ENCODE measurements at regions of chr21 and their contacts with region 1.

Region 1: GRCh38 chr21:39633770-39634181 is 21.0 kb downstream of the B3GALT5 start:
- DNase-seq: peak; percentile 95
- ATAC-seq: peak; percentile 83
- H3K4me3 ChIP-seq: peak overlapping the region; percentile 48
- H3K27ac ChIP-seq: peak overlapping the region; percentile 95
- H3K4me1 ChIP-seq: peaks cover 72% of the 10 kb centered on the region
- H3K27me3 ChIP-seq: no peaks in the 10 kb centered on the region
- CTCF ChIP-seq: no peak

Region 2: DNA sequence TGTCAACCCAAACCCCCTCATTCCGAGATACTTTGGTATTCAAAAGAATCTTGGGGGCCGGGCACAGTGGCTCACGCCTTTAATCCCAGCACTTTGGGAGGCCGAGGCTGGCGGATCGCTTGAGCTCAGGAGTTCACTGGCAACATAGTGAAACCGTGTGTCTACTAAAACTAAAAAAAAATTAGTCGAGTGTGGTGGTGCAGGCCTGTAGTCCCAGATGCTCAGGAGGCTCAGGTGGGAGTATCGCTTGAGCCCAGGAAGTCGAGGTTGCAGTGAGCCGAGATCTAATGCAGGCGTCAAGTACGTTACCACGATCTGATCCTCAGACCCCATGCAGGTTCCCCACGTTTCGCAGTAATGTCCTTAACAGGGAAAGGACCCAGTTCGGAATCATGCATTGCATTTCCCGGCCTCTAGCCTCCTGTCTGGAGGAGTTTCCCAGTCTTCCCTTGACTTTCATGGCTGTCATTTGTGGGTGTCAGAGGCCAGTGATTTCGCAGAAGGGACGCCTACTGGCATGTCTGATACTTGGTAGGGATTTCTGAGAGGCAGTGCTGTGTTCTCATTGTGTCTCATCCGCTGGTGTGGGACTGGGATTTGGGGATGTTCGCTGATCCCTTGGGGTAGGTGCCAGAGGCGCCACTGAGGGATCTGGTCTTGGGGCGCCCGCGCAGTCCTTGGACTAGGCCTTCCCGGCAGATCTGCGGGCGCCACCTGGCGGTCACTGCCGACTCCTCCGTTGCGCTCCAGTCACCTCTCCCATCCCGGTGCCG is 245.6 kb before region 1 on chr21:
- CTCF ChIA-PET with region 1: interaction called, 4 read pairs
- POLR2A ChIA-PET with region 1: no interaction called
- intact Hi-C with region 1: loop called (anchors 10 kb)
- DNase-seq: peak; percentile 85
- ATAC-seq: peak; percentile 92
- H3K4me3 ChIP-seq: peak overlapping the region; percentile 70
- H3K27ac ChIP-seq: no peak overlapping the region
- H3K4me1 ChIP-seq: peaks cover 9% of the 10 kb centered on the region
- H3K27me3 ChIP-seq: no peaks in the 10 kb centered on the region
- CTCF ChIP-seq: peak; percentile 94

Region 3: DNA sequence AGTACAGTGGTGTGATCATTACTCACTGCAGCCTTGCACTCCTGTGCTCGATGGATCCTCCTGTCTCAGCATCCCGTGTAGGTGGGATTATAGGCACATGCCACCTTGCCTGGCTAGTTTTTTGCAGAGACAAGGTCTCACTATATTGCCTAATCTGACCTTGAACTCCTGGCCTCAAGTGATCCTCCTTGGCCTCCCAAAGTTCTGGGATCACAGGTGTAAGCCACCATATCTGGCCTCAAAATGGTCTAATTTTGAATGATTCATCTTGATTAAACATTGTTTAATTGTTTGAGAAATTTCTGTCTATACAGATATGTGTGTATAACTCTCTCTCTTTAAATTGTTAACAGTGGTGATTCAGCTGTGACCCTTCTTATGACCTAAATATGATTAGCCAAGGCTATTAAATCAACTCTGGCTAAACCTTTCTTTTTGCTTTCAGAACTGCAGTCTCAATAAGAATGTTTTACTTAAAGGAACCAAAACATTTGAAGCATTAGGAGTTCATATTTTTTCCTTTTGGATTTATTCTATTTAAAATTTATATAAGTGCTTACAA is 40.3 kb before region 1 on chr21:
- CTCF ChIA-PET with region 1: no interaction called
- POLR2A ChIA-PET with region 1: no interaction called
- intact Hi-C with region 1: loop called (anchors 2 kb)
- DNase-seq: peak; percentile 60
- ATAC-seq: peak; percentile 88
- H3K4me3 ChIP-seq: no peak overlapping the region
- H3K27ac ChIP-seq: no peak overlapping the region
- H3K4me1 ChIP-seq: peaks cover 6% of the 10 kb centered on the region; the same call in 1 of the 2 replicates
- H3K27me3 ChIP-seq: no peaks in the 10 kb centered on the region
- CTCF ChIP-seq: no peak

Region 4: GRCh38 chr21:39705849-39706248 is 72.1 kb after region 1 on chr21:
- CTCF ChIA-PET with region 1: interaction called, 6 read pairs
- POLR2A ChIA-PET with region 1: no interaction called
- intact Hi-C with region 1: loop called (anchors 2 kb)
- DNase-seq: peak; percentile 44
- ATAC-seq: peak; percentile 45
- H3K4me3 ChIP-seq: no peak overlapping the region
- H3K27ac ChIP-seq: no peak overlapping the region
- H3K4me1 ChIP-seq: no peaks in the 10 kb centered on the region
- H3K27me3 ChIP-seq: no peaks in the 10 kb centered on the region
- CTCF ChIP-seq: peak; percentile 60